Activated CD8-positive, alpha-beta T cell treated with anti-CD3 and anti-CD28 coated beads for 36 hours (primary cell): ENCODE measurements at regions of chr11 and their contacts with region 1.

Region 1: GRCh38 chr11:832321-833113 is at the start of gene CD151:
- DNase-seq: peak; percentile 66
- ATAC-seq: peak; percentile 46
- H3K4me3 Mint-ChIP-seq: peak within 1 kb of the TSS; percentile 64
- H3K27ac Mint-ChIP-seq: no peak within 1 kb of the TSS
- H3K4me1 Mint-ChIP-seq: peaks cover 35% of the 10 kb centered on the region
- H3K27me3 Mint-ChIP-seq: peaks cover 38% of the 10 kb centered on the region
- CTCF ChIP-seq: no peak
- total RNA-seq, gene CD151: 45.9 to 46.5 TPM

Region 2: GRCh38 chr11:802693-803466 is 29.6 kb before region 1 on chr11:
- CTCF ChIA-PET with region 1: no interaction called
- POLR2A ChIA-PET with region 1: no interaction called
- intact Hi-C with region 1: no loop called
- DNase-seq: no peak
- ATAC-seq: no peak
- H3K4me3 Mint-ChIP-seq: peak overlapping the region; percentile 38
- H3K27ac Mint-ChIP-seq: no peak overlapping the region
- H3K4me1 Mint-ChIP-seq: peaks cover 2% of the 10 kb centered on the region
- H3K27me3 Mint-ChIP-seq: no peaks in the 10 kb centered on the region
- CTCF ChIP-seq: no peak

Region 3: GRCh38 chr11:819129-819931 is 13.2 kb before region 1 on chr11:
- CTCF ChIA-PET with region 1: interaction called, 11 read pairs
- POLR2A ChIA-PET with region 1: interaction called, 273 read pairs
- intact Hi-C with region 1: no loop called
- DNase-seq: peak; percentile 94
- ATAC-seq: peak; percentile 85
- H3K4me3 Mint-ChIP-seq: peak overlapping the region; percentile 73
- H3K27ac Mint-ChIP-seq: peak overlapping the region; percentile 64
- H3K4me1 Mint-ChIP-seq: peaks cover 10% of the 10 kb centered on the region
- H3K27me3 Mint-ChIP-seq: no peaks in the 10 kb centered on the region
- CTCF ChIP-seq: peak; percentile 56